Right ventricle myocardium inferior (tissue), 1 donor: ENCODE measurements at regions of chr9 and their contacts with region 1.

Region 1: DNA sequence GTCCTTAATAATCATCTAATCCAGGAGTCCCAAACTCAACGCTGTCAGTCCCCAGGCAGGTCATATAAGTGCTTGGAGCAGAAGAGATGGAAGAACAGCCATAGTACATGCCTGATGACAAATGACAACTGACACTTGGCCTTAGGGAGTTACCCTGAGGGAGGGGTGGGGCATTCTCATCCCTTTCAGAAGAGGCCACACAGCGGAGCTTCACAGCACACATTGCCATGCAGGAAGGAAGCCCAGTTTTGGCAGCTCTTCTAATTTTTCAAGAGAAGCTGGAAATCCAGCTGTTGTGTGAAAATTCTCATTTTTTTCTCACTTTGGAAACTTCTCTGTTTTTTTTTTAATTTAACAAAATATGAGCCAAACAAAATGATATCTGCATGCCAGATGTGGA is 89.0 kb downstream of the ASTN2 start:
- DNase-seq: no peak
- ATAC-seq: no peak

Region 2: GRCh38 chr9:117387422-117387821 is 61.6 kb after region 1 on chr9:
- intact Hi-C with region 1: loop called (anchors 10 kb)
- DNase-seq: no peak
- ATAC-seq: no peak